Heart right ventricle (tissue), 16 donors: ENCODE measurements at regions of chr6 and their contacts with region 1.

Region 1: DNA sequence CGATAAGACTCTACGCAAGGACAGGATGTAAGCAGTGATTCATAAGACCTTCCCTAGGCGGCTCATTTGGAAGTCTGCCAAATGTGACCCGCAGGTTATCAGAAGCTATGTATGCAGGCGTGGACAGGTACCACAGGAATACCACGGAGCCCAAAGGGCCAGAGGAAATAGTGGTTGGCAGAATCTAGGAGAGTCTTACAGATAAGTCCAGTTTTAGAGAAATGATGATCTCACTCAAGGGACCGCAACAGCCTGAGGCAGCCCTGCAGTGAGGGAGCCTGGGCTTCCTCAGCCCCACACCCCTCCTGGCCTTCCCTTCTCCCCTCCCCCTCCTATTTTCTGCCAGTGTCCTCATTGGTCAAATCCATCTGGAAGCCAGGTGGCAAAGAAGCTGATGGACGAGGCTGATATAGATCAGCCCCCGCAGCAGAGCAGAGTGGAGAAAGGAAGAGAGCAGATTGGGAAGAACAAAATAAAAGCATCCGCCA is 110.6 kb downstream of the FNDC1 start:
- DNase-seq: no peak
- ATAC-seq: peak in 2 of 8 donors; percentile 25 to 30
- H3K4me3 ChIP-seq: no peak overlapping the region
- H3K27ac ChIP-seq: no peak overlapping the region
- H3K4me1 ChIP-seq: peaks cover 0 to 8% (median 0%) of the 10 kb centered on the region in 9 donors
- H3K27me3 ChIP-seq: peaks cover 0 to 8% (median 3%) of the 10 kb centered on the region in 7 donors
- CTCF ChIP-seq: no peak

Region 2: DNA sequence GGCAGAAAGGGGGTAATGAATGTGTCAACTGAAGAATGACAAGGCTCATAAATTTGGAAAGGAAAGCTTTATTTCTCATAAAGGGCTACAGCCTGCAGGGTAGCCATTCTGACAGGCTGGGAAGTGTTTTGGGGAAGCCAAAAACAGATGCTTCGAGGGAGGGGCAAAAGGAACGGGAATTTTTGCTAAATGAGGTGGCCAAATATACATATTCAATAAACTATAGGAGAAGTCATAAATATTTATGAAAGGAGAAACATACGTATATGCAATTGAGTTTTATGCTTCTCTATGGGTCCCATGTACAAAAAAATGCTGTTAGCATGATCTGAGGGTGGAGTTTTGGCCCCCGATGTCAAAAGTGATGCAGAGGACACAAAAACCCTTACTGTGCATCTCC is 70.1 kb after region 1 on chr6:
- intact Hi-C with region 1: no loop called
- DNase-seq: no peak
- ATAC-seq: no peak
- H3K4me3 ChIP-seq: no peak overlapping the region
- H3K27ac ChIP-seq: no peak overlapping the region
- H3K4me1 ChIP-seq: no peaks in the 10 kb centered on the region
- H3K27me3 ChIP-seq: peaks cover 0 to 6% (median 0%) of the 10 kb centered on the region in 7 donors
- CTCF ChIP-seq: no peak

Region 3: GRCh38 chr6:160697826-160698225 is 1418.0 kb after region 1 on chr6:
- intact Hi-C with region 1: loop called in 1 of 10 experiments (anchors 5 kb)
- DNase-seq: no peak
- ATAC-seq: no peak
- H3K4me3 ChIP-seq: no peak overlapping the region
- H3K27ac ChIP-seq: no peak overlapping the region
- H3K4me1 ChIP-seq: no peaks in the 10 kb centered on the region
- H3K27me3 ChIP-seq: peaks cover 0 to 13% (median 0%) of the 10 kb centered on the region in 7 donors
- CTCF ChIP-seq: no peak